ENCODE measurements at regions of chr17 and their contacts with region 1.

Region 1: GRCh38 chr17:7989781-7990655 is 12.4 kb upstream of the GUCY2D start:
- DNase-seq: peak; percentile 95
- H3K4me3 Mint-ChIP-seq: peak overlapping the region; percentile 73
- H3K27ac Mint-ChIP-seq: peak overlapping the region; percentile 76
- H3K4me1 Mint-ChIP-seq: peaks cover 17% of the 10 kb centered on the region
- H3K27me3 Mint-ChIP-seq: no peaks in the 10 kb centered on the region

Region 2: DNA sequence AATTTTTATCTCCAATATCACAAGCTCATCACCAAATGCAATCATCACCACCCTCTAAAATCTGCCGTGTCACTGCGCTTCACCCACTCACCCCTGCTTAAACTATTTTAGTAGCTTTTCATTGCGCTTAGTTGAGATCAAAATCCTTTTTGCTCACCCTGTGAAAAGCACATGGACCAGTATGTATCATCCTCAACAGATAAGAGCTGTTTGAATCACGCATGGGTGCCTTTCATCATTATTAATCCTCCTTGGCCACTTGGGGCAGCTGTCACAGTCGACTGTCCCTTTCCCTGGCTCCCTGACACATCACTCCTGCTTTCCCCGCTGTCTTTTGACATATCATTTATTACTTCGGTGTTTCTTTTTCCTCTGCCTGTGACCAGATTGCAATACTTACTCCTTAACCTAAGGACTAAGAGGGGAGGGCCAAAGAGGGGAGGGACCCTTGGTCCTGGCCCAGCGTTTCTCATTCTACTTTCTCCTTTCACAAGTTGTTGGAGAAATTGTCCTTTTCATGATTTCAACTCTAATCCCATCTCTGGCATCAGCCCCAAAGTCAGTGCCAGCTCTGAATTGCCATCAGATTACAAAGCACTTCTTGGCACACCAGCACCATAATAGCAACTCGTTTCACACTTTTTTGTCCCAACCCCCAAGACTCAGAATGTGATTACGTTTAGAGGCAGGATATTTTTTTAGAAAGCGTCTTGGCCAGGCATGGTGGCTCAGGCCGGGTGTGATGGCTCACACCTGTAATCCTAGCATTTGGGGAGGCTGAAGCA is 164.6 kb before region 1 on chr17:
- CTCF ChIA-PET with region 1: interaction called, 4 read pairs
- intact Hi-C with region 1: loop called (anchors 1 kb)
- DNase-seq: no peak
- H3K4me3 Mint-ChIP-seq: no peak overlapping the region
- H3K27ac Mint-ChIP-seq: no peak overlapping the region
- H3K4me1 Mint-ChIP-seq: no peaks in the 10 kb centered on the region
- H3K27me3 Mint-ChIP-seq: no peaks in the 10 kb centered on the region

Region 3: GRCh38 chr17:7862692-7863437 is 127.2 kb before region 1 on chr17:
- CTCF ChIA-PET with region 1: interaction called, 99 read pairs
- intact Hi-C with region 1: loop called (anchors 1 kb)
- DNase-seq: peak; percentile 56
- H3K4me3 Mint-ChIP-seq: no peak overlapping the region
- H3K27ac Mint-ChIP-seq: no peak overlapping the region
- H3K4me1 Mint-ChIP-seq: peaks cover 11% of the 10 kb centered on the region
- H3K27me3 Mint-ChIP-seq: no peaks in the 10 kb centered on the region

Region 4: GRCh38 chr17:7915611-7916382 is 74.2 kb before region 1 on chr17 and contains the start of gene RNF227:
- CTCF ChIA-PET with region 1: interaction called, 58 read pairs
- intact Hi-C with region 1: loop called (anchors 1 kb)
- DNase-seq: peak; percentile 91
- H3K4me3 Mint-ChIP-seq: peak within 1 kb of the TSS; percentile 93
- H3K27ac Mint-ChIP-seq: peak within 1 kb of the TSS; percentile 92
- H3K4me1 Mint-ChIP-seq: peaks cover 29% of the 10 kb centered on the region
- H3K27me3 Mint-ChIP-seq: no peaks in the 10 kb centered on the region
- total RNA-seq, gene RNF227: 3.1 to 3.8 TPM

Region 5: DNA sequence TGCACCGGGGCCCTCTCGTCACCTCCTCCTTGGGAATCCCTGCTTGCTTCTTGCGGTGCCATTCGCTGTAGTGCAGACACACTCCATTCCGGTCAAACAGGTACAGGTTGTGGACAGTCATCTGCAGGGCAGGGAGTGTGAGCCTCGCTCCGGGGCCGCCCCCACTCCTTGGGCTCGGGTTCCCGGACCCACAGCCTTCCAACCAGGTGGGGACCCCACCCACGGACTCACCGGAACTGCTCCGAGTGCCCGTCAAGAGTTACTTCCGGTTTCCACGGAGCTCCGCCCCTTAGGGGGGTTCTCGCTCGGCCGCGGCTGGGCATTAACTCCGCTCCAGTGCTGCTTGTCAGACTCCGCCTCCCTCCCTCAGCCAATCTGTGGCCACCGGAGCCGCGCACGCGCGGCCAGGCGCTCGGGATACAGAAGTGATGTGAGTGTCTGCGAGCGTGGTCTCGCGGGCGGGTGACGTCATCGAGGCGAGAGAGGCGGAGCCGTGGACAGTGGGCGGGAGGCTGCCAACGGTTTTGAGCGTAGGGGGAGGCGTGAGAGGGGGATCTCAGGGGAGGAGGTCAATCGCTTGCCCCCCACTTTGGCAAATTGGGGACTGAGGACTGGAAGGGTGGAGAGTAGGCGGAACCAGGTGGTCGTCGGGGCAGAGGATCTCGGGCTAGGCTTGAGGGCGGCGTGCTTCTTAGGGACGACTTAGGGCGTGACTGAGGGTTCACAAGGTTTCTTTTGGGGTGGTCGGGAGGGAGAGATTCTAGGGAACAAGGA is 58.1 kb before region 1 on chr17 and contains the starts of genes CNTROB and TRAPPC1:
- CTCF ChIA-PET with region 1: interaction called, 38 read pairs
- intact Hi-C with region 1: loop called (anchors 1 kb)
- DNase-seq: peak; percentile 100
- H3K4me3 Mint-ChIP-seq: peak within 1 kb of the TSS; percentile 91
- H3K27ac Mint-ChIP-seq: peak within 1 kb of the TSS; percentile 87
- H3K4me1 Mint-ChIP-seq: peaks cover 38% of the 10 kb centered on the region
- H3K27me3 Mint-ChIP-seq: no peaks in the 10 kb centered on the region
- total RNA-seq, gene CNTROB: 49.3 to 56.3 TPM
- total RNA-seq, gene TRAPPC1: 162 to 172 TPM

Region 6: GRCh38 chr17:8041249-8041928 is 51.4 kb after region 1 on chr17:
- CTCF ChIA-PET with region 1: interaction called, 37 read pairs
- intact Hi-C with region 1: loop called (anchors 1 kb)
- DNase-seq: peak; percentile 62
- H3K4me3 Mint-ChIP-seq: no peak overlapping the region
- H3K27ac Mint-ChIP-seq: no peak overlapping the region
- H3K4me1 Mint-ChIP-seq: peaks cover 3% of the 10 kb centered on the region
- H3K27me3 Mint-ChIP-seq: peaks cover 22% of the 10 kb centered on the region

Region 7: DNA sequence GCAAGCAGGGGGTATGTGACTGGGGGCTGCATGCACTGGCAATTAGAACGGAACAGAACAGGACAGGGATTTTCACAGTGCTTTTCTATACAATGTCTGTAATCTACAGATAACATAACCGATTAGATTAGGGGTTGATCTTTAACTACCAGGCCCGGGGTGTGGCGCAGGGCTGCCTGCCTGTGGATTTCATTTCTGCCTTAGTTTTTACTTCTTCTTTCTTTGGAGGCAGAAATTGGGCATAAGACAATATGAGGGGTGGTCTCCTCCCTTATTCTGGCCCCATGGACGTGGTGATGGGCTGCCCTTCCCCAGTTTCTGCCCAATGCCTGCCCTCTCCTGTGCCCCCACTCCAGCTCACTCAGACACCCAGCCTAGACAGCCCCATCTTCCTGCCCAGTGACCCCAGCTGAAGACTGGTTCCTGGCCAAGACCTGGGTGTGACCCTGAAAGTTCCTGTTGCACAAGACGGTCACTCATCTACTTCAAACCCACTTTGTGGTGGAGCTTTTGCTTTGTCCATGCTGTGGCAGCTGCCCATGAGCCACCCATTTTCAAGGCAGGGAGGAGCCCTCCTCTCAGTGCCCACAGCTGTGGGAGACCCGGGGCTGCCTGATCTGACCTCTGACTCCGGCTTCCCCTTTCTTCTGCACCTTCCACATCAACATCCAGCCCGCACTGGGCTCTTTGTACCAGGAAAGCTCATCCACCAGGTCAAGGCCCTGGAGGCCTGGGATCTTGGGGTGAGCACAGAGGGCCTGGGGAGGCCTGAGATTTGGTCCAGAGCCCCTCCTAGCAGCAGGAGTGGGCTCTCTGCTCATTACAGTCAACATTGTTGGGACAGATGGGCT is 78.9 kb after region 1 on chr17:
- CTCF ChIA-PET with region 1: no interaction called
- intact Hi-C with region 1: no loop called
- DNase-seq: no peak
- H3K4me3 Mint-ChIP-seq: no peak overlapping the region
- H3K27ac Mint-ChIP-seq: no peak overlapping the region
- H3K4me1 Mint-ChIP-seq: peaks cover 14% of the 10 kb centered on the region
- H3K27me3 Mint-ChIP-seq: peaks cover 31% of the 10 kb centered on the region